PC-9 (cell line): ENCODE measurements at regions of chr17 and their contacts with region 1.

Region 1: GRCh38 chr17:31907342-31907962 is 5.9 kb upstream of the UTP6 start:
- DNase-seq: no peak
- H3K4me3 ChIP-seq: no peak overlapping the region
- H3K27ac ChIP-seq: no peak overlapping the region
- H3K4me1 ChIP-seq: no peaks in the 10 kb centered on the region; the same call in 1 of the 2 replicates
- H3K27me3 ChIP-seq: no peaks in the 10 kb centered on the region
- CTCF ChIP-seq: no peak

Region 2: GRCh38 chr17:31172388-31172787 is 735.1 kb before region 1 on chr17:
- CTCF ChIA-PET with region 1: no interaction called
- POLR2A ChIA-PET with region 1: interaction called, 11 read pairs
- intact Hi-C with region 1: no loop called
- DNase-seq: no peak
- H3K4me3 ChIP-seq: no peak overlapping the region
- H3K27ac ChIP-seq: no peak overlapping the region
- H3K4me1 ChIP-seq: no peaks in the 10 kb centered on the region
- H3K27me3 ChIP-seq: no peaks in the 10 kb centered on the region
- CTCF ChIP-seq: no peak

Region 3: DNA sequence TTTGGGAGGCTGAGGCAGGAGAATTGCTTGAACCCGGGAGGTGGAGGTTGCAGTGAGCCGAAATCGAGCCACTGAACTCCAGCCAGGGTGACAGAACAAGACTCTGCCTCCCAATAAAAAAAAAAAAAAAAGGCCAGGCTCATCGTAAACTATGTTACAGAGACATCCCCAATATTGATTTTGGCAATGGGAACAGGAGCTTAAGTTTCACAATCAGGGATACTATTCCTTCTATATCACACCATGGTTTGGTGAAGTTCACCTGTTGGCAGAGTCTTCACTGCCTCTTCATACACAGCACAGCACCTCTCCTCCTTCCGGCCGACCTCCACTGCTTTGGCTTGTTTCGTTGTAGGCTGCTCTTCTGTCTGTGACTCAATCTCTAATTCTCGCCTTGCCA is 27.1 kb before region 1 on chr17:
- CTCF ChIA-PET with region 1: interaction called, 18 read pairs
- POLR2A ChIA-PET with region 1: no interaction called
- intact Hi-C with region 1: no loop called
- DNase-seq: no peak
- H3K4me3 ChIP-seq: no peak overlapping the region
- H3K27ac ChIP-seq: no peak overlapping the region
- H3K4me1 ChIP-seq: no peaks in the 10 kb centered on the region
- H3K27me3 ChIP-seq: no peaks in the 10 kb centered on the region
- CTCF ChIP-seq: no peak